ENCODE measurements at regions of chr2 and their contacts with region 1.

Region 1: DNA sequence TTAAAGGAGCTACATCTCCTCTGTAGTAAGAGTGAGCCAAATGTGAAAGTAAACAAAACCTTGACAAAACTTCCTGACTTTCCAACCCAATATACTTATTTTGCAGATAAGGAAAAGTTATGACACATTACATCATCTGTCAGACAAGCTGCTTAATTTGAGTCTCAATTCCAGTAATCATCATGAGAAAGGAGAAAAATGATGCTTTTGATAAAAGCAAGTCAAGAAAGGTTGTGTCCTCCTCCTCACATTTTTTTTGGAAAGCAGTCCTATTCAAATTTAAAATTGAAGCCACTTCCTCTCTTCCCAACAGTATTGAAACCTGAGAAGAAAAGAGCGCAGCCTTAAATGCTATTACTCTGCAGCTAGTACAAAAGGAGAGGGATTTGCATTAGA is 519.6 kb downstream of the LRP1B start:
- DNase-seq: peak; percentile 87
- H3K4me3 ChIP-seq: peak overlapping the region in 2 of 3 experiments; percentile 15 to 54
- H3K27ac ChIP-seq: peak overlapping the region; percentile 73
- H3K4me1 ChIP-seq: peaks cover 20% of the 10 kb centered on the region
- H3K27me3 ChIP-seq: no peaks in the 10 kb centered on the region
- CTCF ChIP-seq: no peak
- POLR2A ChIP-seq: no peak

Region 2: DNA sequence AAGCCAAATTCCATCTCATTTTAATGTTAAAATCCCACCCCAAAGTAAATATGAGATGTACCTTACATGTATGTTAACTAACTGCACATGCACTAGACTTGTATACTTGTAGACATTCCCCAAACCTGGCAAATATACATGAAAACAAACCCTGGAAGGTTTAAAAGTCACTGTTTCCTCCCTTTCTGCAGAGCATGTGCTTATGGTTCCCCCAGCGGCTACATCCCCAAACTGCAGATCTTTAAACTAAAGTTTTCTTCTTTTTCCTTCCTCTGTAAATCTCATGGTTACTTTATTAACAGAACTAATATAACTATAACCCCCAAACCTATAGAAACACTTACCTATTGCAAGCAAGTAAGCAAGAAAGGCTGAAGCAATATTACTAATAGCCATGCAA is 211.9 kb before region 1 on chr2:
- CTCF ChIA-PET with region 1: no interaction called
- POLR2A ChIA-PET with region 1: no interaction called
- dilution Hi-C with region 1: no loop called
- intact Hi-C with region 1: loop called (anchors 10 kb)
- DNase-seq: peak; percentile 10
- H3K4me3 ChIP-seq: no peak overlapping the region
- H3K27ac ChIP-seq: no peak overlapping the region
- H3K4me1 ChIP-seq: no peaks in the 10 kb centered on the region
- H3K27me3 ChIP-seq: no peaks in the 10 kb centered on the region
- CTCF ChIP-seq: peak; percentile 22 to 24
- POLR2A ChIP-seq: no peak

Region 3: GRCh38 chr2:142188562-142188961 is 577.4 kb after region 1 on chr2:
- CTCF ChIA-PET with region 1: no interaction called
- POLR2A ChIA-PET with region 1: no interaction called
- dilution Hi-C with region 1: no loop called
- intact Hi-C with region 1: loop called (anchors 5 kb)
- DNase-seq: no peak
- H3K4me3 ChIP-seq: no peak overlapping the region
- H3K27ac ChIP-seq: no peak overlapping the region
- H3K4me1 ChIP-seq: peaks cover 36% of the 10 kb centered on the region
- H3K27me3 ChIP-seq: no peaks in the 10 kb centered on the region
- CTCF ChIP-seq: no peak
- POLR2A ChIP-seq: no peak